Ascending aorta (tissue), 2 donors: ENCODE measurements at regions of chr9 and their contacts with region 1.

Region 1: DNA sequence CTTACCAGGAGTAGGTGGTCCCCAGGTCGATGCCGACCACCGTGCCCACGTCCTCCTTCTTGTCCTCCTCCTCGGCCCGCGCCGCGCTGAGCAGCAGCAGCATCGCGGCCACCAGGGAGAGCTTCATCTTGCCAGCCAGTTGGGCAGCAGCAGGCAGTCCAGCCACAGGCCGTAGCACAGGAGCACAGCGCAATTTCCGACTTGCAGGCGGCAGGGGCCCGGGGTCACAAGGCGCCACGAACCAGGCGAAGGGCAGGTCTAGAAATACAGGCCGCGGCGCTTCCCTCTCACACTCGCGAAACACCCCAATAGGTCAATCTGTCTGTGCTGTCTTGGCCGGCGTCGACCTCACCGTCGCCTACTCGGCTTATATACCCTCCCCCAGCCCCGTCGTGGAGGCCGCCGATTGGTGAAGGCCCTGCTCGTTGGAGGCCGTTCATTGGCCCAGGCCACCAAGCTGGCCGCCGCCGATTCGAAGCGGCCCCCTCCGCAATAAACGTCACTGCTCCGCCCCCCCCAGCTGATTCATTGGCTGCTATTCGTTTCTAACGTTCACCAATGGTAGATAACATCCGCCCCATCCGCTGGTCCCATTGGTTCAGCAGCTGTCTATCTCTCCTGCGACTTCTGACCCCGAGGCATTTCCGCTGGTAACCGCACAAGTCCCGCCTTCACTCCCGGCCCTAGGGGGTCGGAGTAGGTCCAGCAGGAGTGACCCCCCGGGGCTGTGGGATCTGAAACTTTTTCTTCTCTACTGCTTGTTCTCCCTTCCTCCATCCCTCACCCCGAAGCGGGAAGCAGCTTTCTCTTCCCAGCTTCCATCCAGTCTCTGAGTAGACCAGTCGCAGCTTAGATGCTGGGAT is at the start of gene HSPA5:
- DNase-seq: peak; percentile 99 to 100
- H3K4me3 ChIP-seq: peak within 1 kb of the TSS; percentile 79 to 95
- H3K27ac ChIP-seq: peak within 1 kb of the TSS; percentile 97
- H3K4me1 ChIP-seq: peaks cover 16 to 35% of the 10 kb centered on the region in 2 donors
- H3K27me3 ChIP-seq: no peaks in the 10 kb centered on the region
- CTCF ChIP-seq: peak in 2 of 3 experiments; percentile 19 to 28
- total RNA-seq, gene HSPA5: 133 TPM

Region 2: DNA sequence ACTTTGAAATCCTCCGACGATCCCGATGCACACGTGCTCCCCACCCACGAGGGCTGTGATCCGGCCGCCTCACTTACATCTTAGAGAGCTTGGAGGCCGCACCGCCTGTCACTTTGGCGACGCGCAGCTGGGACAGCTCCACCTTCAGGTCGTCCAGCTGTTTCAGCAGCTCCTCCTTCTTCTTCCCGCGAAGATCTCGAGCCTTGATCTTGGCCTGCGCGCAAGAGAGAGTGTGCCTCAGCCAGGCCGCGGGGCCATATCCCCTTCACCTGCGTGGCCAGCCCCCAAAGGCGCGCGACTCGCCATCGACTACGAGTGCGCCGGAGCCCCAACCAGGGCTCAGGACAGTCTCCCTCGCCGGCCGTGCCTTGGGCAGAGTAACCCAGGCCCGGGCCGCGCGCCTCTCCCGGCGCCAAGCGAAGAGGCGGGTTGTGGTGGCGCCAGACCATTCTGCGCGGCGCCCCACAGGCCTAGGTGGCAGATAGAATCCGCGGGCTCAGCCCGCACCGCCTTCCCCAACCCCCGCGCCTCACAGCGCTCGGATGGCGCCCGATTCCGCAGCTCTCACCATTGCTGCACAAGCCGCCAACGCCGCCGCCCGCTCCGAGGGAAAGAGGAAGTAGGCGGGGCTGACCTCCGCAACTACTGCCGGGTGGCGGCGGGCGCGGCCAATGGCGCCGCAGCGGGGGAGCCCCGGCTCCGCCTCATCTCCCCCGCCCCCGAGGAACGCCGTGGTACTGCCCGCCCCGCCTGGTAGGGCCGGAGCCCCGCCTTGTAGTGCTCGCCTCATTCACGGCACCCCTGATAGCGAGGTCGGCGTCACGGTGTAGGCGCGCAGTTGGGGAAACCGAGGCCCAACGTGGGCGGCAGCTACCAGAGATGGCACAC is 379.6 kb before region 1 on chr9 and contains the starts of genes ARPC5L and RPL35:
- intact Hi-C with region 1: loop called (anchors 5 kb)
- DNase-seq: peak; percentile 74 to 97
- H3K4me3 ChIP-seq: peak within 1 kb of the TSS; percentile 88 to 98
- H3K27ac ChIP-seq: peak within 1 kb of the TSS; percentile 90 to 97
- H3K4me1 ChIP-seq: peaks cover 8 to 13% of the 10 kb centered on the region in 2 donors
- H3K27me3 ChIP-seq: no peaks in the 10 kb centered on the region
- CTCF ChIP-seq: peak in 2 of 3 experiments; percentile 24 to 25
- total RNA-seq, gene ARPC5L: 12.0 TPM
- total RNA-seq, gene RPL35: 2,123 TPM

Region 3: DNA sequence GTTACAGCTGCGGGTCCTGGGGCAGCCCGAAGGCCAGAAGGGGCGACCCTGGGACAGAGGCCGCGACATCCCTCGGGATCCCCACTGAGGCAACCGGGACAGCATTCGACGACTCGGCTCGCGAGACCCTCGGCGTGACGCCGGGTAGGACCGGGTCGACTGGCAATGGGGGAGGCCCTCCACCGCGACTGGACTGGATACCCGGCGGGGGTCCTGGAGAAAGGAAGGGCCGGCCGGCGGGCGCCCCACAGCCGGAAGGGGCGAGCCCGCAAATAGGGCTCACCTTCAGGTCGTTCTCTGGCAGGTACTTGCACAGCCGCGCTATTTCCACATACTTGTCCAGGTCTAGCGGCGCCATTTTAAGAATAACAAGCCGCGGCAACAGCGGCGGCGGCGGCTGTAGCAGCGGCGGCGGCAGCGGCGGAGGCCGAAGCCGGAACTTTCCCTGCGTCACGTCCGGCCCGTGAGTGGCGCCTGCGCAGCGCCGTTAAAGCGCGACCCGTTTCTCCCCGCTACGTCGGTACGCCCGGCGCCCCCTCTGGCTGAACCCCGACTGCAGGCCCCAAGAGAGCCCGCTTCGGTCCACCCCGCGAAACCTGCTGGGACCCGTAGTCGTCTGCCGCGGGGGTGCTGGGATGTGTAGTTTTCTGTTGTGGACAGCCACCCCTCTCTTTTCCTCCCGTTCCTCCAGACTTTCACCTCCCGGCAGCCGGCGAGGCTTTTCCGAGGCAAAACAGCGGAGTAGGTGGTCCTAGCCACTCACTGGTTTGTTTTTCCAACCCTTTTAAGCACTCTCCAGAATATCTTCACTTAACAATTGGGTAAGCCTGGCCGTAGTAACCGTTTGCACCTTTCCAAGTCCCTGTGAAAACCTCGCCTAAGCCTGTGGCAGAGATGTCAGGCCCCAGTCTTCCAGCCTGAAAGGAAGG is 51.6 kb before region 1 on chr9 and contains the start of gene PPP6C:
- intact Hi-C with region 1: loop called (anchors 2 kb)
- DNase-seq: peak; percentile 80 to 98
- H3K4me3 ChIP-seq: peak within 1 kb of the TSS; percentile 84 to 99
- H3K27ac ChIP-seq: peak within 1 kb of the TSS; percentile 98 to 99
- H3K4me1 ChIP-seq: peaks cover 9 to 44% of the 10 kb centered on the region in 2 donors
- H3K27me3 ChIP-seq: no peaks in the 10 kb centered on the region
- CTCF ChIP-seq: peak; percentile 53 to 68 (median 60)
- total RNA-seq, gene PPP6C: 33.8 TPM

Region 4: DNA sequence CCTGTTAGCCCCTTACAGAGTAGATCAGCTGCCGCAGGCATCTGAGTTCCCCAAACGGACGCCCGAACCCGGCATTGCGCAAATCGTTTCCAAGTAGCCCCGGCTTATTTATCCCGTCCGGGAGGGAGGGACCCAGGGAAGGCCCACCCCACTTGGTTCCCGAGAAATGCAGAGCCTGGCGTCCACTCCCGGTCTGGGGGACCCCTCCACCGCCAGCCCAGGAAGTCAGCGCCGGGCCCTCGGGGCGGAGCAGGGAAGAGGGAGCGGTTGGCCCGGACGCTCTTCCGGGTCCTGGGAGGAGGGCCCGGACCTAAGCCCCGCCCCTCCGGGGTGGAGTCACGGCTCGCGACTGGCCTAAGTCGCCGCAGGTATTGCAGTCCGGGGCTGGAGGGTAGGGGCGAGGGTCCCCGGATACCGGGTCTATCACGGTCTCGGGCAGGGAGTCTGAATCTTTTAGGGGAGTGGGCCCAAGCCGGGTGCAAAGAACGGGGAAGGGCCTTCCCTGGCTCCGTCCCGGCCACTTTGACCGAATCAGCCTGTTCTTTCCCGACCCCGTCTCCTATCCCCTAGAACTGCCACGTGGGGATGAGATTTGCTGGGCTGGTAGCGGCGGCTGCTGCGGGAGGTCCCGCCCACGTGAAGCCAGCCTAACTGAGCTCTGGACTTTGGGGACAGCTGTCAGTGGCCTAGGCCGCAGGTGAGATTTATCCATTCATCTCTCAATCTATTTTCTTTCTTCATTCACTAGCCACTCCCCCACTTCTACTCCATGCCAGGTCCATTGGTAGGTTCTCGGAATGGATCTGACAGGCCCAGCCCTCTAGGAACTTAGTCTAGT is 40.8 kb before region 1 on chr9 and contains the start of gene RABEPK:
- intact Hi-C with region 1: loop called (anchors 1 kb)
- DNase-seq: peak; percentile 64 to 94
- H3K4me3 ChIP-seq: peak within 1 kb of the TSS; percentile 77 to 78
- H3K27ac ChIP-seq: peak within 1 kb of the TSS; percentile 89 to 95
- H3K4me1 ChIP-seq: peaks cover 0 to 2% of the 10 kb centered on the region in 2 donors
- H3K27me3 ChIP-seq: no peaks in the 10 kb centered on the region
- CTCF ChIP-seq: no peak
- total RNA-seq, gene RABEPK: 20.4 TPM

Region 5: DNA sequence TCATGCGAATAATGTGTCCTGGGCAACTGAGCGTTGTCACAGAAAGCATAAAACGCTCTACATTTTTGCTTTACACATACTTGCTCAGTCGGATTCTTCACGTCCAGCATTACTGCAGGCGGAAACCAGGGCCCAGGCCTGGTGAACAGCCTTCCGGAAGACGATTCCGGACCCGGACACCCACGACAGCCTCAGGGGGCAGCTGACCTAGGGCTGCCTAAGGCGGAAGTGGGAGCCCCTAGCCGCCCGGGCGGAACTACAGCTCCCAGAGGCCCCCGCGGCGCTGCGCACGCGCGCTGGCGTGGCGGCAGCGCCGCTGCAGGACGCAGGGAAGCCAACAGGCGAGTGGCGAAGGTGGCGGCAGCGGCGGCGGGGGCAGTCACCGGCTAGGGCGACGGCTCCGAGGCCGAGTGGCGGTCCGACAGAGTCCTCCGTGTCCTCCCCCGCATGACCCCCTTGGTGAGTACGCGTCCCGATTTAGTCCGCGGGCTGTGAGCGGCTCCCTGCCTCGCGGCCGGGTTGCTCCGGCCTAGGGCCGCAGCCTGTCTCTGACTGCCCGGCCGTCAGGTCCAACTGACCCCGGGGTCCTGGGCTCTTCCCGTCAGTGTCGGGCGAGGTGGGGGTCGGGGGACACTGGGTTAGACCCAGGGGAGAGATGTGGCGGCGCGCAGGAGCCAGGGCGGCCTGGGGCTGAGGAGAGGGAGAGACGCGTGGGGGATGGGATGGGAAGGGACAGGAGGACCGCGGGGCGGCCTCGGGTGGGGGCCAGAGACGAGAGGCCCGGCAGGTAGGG is 20.5 kb after region 1 on chr9 and contains the start of gene GAPVD1:
- intact Hi-C with region 1: loop called (anchors 1 kb)
- DNase-seq: peak; percentile 43 to 94
- H3K4me3 ChIP-seq: peak within 1 kb of the TSS; percentile 94 to 99
- H3K27ac ChIP-seq: peak within 1 kb of the TSS; percentile 75 to 78
- H3K4me1 ChIP-seq: peaks cover 0 to 17% of the 10 kb centered on the region in 2 donors
- H3K27me3 ChIP-seq: no peaks in the 10 kb centered on the region
- CTCF ChIP-seq: peak in 2 of 3 experiments; percentile 34 to 45
- total RNA-seq, gene GAPVD1: 18.9 TPM